ENCODE measurements at regions of chr10 and their contacts with region 1.

Region 1: GRCh38 chr10:70363971-70364771 is 18.3 kb downstream of the LRRC20 start:
- DNase-seq: peak; percentile 97
- H3K4me3 ChIP-seq: peak overlapping the region in 1 of 8 donors; percentile 22
- H3K27ac ChIP-seq: peak overlapping the region in 6 of 8 donors; percentile 39 to 75 (median 70)
- H3K4me1 ChIP-seq: peaks cover 7 to 30% (median 13%) of the 10 kb centered on the region in 6 donors
- H3K27me3 ChIP-seq: no peaks in the 10 kb centered on the region
- CTCF ChIP-seq: peak; percentile 91 to 97 (median 95)
- POLR2A ChIP-seq: no peak

Region 2: GRCh38 chr10:70223728-70224127 is 140.4 kb before region 1 on chr10:
- intact Hi-C with region 1: loop called (anchors 2 kb)
- DNase-seq: no peak
- H3K4me3 ChIP-seq: no peak overlapping the region
- H3K27ac ChIP-seq: no peak overlapping the region
- H3K4me1 ChIP-seq: peaks cover 0 to 34% (median 17%) of the 10 kb centered on the region in 6 donors
- H3K27me3 ChIP-seq: no peaks in the 10 kb centered on the region
- CTCF ChIP-seq: no peak
- POLR2A ChIP-seq: no peak

Region 3: DNA sequence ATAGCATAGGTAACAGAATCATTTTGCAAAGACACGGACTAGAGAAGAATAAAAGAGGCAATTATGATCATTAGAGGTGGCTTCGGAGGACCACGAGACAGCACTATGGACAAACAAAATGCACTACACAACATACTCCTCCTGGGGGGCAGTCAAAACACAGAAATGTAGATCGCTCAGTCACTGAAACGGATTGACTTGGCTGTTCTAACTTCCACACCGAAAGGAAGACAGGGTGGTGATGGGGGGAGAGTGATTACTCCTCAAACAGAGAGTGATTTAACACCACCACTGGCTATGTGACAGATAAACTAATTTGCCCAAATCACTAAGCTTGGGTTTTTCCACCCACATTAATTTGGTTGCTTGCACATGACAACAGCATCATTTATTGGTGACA is 116.8 kb before region 1 on chr10:
- intact Hi-C with region 1: no loop called
- DNase-seq: no peak
- H3K4me3 ChIP-seq: no peak overlapping the region
- H3K27ac ChIP-seq: no peak overlapping the region
- H3K4me1 ChIP-seq: no peaks in the 10 kb centered on the region
- H3K27me3 ChIP-seq: peaks cover 0 to 6% (median 0%) of the 10 kb centered on the region in 7 donors
- CTCF ChIP-seq: no peak
- POLR2A ChIP-seq: no peak

Region 4: GRCh38 chr10:70272925-70273316 is 91.2 kb before region 1 on chr10:
- intact Hi-C with region 1: loop called (anchors 10 kb)
- DNase-seq: no peak
- H3K4me3 ChIP-seq: no peak overlapping the region
- H3K27ac ChIP-seq: no peak overlapping the region
- H3K4me1 ChIP-seq: peaks cover 5 to 26% (median 13%) of the 10 kb centered on the region in 6 donors
- H3K27me3 ChIP-seq: no peaks in the 10 kb centered on the region
- CTCF ChIP-seq: peak; percentile 17 to 62 (median 56)
- POLR2A ChIP-seq: no peak

Measured in spleen (tissue), 13 donors.